Activated CD4-positive, alpha-beta memory T cell treated with anti-CD3 and anti-CD28 coated beads for 36 hours (primary cell): ENCODE measurements at regions of chr6 and their contacts with region 1.

Region 1: DNA sequence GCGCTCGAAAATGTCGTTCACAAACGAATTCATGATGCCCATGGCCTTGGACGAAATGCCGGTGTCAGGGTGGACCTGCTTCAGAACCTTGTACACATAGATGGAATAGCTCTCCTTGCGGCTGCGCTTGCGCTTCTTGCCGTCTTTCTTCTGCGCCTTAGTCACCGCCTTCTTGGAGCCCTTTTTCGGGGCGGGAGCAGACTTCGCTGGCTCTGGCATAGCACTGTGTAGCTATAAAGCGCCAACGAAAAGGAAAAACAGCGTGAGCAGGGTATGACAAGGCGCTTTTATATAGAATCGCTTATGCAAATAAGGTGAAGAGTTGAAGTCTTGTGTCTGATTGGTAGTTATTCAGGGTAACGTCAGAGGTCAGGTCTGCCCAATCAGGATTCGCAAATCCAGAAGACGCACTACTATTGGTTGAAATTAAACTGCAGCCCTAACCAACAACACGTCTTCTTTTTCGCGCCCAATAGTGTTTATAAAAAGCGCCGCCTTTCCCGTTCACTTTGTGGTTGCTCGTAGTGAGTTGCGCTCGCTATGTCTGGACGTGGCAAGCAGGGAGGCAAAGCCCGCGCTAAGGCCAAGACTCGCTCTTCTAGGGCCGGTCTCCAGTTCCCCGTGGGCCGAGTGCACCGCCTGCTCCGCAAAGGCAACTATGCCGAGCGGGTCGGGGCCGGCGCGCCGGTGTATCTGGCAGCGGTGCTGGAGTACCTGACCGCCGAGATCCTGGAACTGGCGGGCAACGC is 114.8 kb upstream of the PRSS16 start:
- DNase-seq: peak; percentile 95
- H3K4me3 Mint-ChIP-seq: no peak overlapping the region
- H3K27ac Mint-ChIP-seq: no peak overlapping the region
- H3K4me1 Mint-ChIP-seq: peaks cover 16% of the 10 kb centered on the region
- H3K27me3 Mint-ChIP-seq: peaks cover 2% of the 10 kb centered on the region

Region 2: GRCh38 chr6:26025894-26026832 is 1106.5 kb before region 1 on chr6:
- CTCF ChIA-PET with region 1: no interaction called
- POLR2A ChIA-PET with region 1: interaction called, 3 read pairs
- intact Hi-C with region 1: loop called (anchors 2 kb)
- DNase-seq: peak; percentile 96
- H3K4me3 Mint-ChIP-seq: peak overlapping the region; percentile 87
- H3K27ac Mint-ChIP-seq: peak overlapping the region; percentile 91
- H3K4me1 Mint-ChIP-seq: peaks cover 53% of the 10 kb centered on the region
- H3K27me3 Mint-ChIP-seq: peaks cover 5% of the 10 kb centered on the region

Region 3: DNA sequence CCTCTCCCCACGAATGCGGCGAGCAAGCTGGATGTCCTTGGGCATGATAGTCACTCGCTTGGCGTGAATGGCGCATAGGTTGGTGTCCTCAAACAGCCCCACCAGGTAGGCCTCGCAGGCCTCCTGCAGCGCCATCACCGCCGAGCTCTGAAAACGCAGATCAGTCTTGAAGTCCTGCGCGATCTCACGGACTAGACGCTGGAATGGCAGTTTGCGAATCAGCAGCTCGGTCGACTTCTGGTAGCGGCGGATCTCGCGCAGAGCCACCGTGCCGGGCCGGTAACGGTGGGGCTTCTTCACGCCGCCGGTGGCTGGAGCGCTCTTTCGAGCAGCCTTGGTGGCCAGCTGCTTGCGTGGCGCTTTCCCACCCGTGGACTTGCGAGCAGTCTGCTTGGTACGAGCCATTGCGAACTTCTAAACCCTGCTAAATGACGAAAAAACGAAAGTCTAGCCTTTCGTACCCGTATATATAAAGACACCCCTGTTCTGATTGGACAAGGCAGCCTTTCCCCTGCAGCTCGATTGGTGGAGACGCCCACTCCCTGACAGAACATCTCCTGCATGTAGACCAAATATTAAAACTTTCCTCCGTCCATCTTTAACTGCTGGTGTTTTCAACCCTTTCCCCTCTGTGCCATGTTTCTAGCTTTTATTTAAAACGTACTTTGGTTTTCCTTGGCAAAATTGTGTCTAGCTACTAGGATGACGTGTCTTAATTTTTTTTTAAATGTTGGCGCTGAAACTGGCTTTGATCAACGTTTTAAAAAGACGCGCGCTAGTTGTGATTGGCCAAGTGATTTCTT is 935.7 kb before region 1 on chr6:
- CTCF ChIA-PET with region 1: no interaction called
- POLR2A ChIA-PET with region 1: interaction called, 29 read pairs
- intact Hi-C with region 1: no loop called
- DNase-seq: peak; percentile 84
- H3K4me3 Mint-ChIP-seq: peak overlapping the region; percentile 86
- H3K27ac Mint-ChIP-seq: peak overlapping the region; percentile 99
- H3K4me1 Mint-ChIP-seq: peaks cover 31% of the 10 kb centered on the region
- H3K27me3 Mint-ChIP-seq: peaks cover 3% of the 10 kb centered on the region

Region 4: GRCh38 chr6:26270903-26271667 is 861.6 kb before region 1 on chr6:
- CTCF ChIA-PET with region 1: no interaction called
- POLR2A ChIA-PET with region 1: interaction called, 33 read pairs
- intact Hi-C with region 1: no loop called
- DNase-seq: peak; percentile 86
- H3K4me3 Mint-ChIP-seq: no peak overlapping the region
- H3K27ac Mint-ChIP-seq: no peak overlapping the region
- H3K4me1 Mint-ChIP-seq: peaks cover 22% of the 10 kb centered on the region
- H3K27me3 Mint-ChIP-seq: peaks cover 2% of the 10 kb centered on the region

Region 5: DNA sequence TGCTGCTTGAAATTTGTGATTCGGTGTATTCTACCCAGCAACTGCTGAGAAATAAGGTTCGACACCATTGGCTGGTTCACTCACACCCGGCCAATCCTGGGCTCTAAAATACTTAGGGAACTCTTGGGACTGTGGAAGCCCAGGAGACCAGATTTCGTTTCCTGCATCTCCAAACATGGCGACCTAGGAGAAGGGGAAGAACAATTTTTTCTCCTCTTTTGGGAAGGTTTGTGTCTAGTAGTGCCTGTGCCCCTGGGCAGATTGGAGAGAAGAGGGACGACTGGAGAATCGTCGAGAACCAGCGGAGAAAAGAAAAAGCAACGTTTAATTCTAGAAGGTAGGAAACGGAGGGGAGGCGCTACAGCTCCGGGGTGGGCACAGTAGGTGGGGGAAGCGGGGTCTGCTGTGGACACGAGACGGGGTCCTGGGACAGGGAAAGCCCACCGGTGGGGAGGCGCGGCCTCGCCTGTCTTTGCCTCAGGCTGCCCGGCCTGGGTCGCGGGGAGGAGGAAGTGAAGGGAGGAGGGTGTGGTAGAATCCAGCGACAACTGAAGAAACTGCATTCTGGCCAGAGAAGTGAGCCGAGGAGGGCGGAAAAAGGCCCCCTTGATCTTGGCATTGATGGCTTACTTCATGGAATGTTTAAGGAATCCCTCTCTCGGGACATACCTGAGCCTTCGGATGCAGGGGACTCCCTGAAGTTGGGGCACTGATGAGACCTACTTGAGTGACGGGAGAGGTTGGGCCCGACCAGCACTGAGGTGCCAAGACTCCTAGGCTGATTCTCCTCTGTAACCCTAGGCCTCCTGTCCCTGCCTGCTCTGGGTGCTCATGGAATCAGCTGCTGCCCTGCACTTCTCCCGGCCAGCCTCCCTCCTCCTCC is 674.7 kb before region 1 on chr6 and contains the start of gene BTN2A1:
- CTCF ChIA-PET with region 1: no interaction called
- POLR2A ChIA-PET with region 1: no interaction called
- intact Hi-C with region 1: no loop called
- DNase-seq: peak; percentile 79
- H3K4me3 Mint-ChIP-seq: peak within 1 kb of the TSS; percentile 98
- H3K27ac Mint-ChIP-seq: peak within 1 kb of the TSS; percentile 98
- H3K4me1 Mint-ChIP-seq: peaks cover 50% of the 10 kb centered on the region
- H3K27me3 Mint-ChIP-seq: no peaks in the 10 kb centered on the region
- total RNA-seq, gene BTN2A1: 17.6 to 19.6 TPM

Region 6: GRCh38 chr6:27157459-27158315 is 25.0 kb after region 1 on chr6:
- CTCF ChIA-PET with region 1: interaction called, 19 read pairs
- POLR2A ChIA-PET with region 1: interaction called, 16 read pairs
- intact Hi-C with region 1: loop called (anchors 1 kb)
- DNase-seq: peak; percentile 91
- H3K4me3 Mint-ChIP-seq: peak overlapping the region; percentile 66
- H3K27ac Mint-ChIP-seq: peak overlapping the region; percentile 77
- H3K4me1 Mint-ChIP-seq: peaks cover 45% of the 10 kb centered on the region
- H3K27me3 Mint-ChIP-seq: no peaks in the 10 kb centered on the region

Region 7: GRCh38 chr6:27838058-27838944 is 705.6 kb after region 1 on chr6:
- CTCF ChIA-PET with region 1: interaction called, 3 read pairs
- POLR2A ChIA-PET with region 1: interaction called, 35 read pairs
- intact Hi-C with region 1: no loop called
- DNase-seq: peak; percentile 88
- H3K4me3 Mint-ChIP-seq: no peak overlapping the region
- H3K27ac Mint-ChIP-seq: no peak overlapping the region
- H3K4me1 Mint-ChIP-seq: peaks cover 22% of the 10 kb centered on the region
- H3K27me3 Mint-ChIP-seq: peaks cover 6% of the 10 kb centered on the region